ENCODE measurements at regions of chr20 and their contacts with region 1.

Region 1: DNA sequence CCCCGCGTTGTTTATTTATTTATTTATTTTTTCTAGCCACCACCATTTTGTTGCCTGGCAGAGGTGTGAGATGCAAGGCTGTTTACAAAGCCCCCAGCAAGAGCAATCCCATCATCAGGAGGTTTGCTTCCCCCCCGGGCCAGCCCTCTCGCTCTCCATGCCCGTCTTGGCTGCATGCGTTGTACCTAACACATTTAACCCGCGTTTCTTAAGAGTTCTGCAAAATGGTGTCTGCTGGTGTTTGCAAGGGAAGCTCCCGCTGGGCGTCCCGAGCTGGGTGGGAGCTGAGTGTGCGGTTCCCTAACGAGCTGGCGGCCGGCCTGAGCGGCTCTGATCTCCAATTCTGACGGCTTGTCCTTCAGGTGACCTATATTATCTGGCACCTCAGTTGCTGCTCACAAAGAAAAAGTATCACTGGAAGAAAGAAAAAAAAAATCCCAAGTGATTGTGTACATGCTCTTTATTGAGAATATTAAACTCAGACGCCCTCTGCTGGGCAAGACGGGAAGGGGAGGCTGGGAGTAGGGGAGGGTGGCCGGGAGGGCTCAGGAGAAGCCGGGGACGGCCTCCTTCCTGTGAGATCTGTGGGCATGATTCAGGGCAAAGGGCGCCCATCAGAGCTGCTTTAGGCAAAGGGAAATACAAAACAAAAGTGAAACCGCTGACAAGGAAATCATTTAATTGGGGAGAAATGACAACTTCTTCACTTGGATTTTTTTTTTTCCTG is 154.8 kb downstream of the BCAS1 start:
- DNase-seq: peak; percentile 85 to 96 (median 88)
- H3K4me3 ChIP-seq: peak overlapping the region; percentile 91 to 94
- H3K4me3 Mint-ChIP-seq: peak overlapping the region; percentile 91 to 98 (median 96)
- H3K27ac ChIP-seq: peak overlapping the region; percentile 51
- H3K27ac Mint-ChIP-seq: peak overlapping the region; percentile 83 to 98 (median 92)
- H3K4me1 ChIP-seq: peaks cover 15% of the 10 kb centered on the region
- H3K4me1 Mint-ChIP-seq: peaks cover 11 to 22% (median 17%) of the 10 kb centered on the region in 4 donors
- H3K27me3 ChIP-seq: no peaks in the 10 kb centered on the region
- H3K27me3 Mint-ChIP-seq: no peaks in the 10 kb centered on the region

Region 2: DNA sequence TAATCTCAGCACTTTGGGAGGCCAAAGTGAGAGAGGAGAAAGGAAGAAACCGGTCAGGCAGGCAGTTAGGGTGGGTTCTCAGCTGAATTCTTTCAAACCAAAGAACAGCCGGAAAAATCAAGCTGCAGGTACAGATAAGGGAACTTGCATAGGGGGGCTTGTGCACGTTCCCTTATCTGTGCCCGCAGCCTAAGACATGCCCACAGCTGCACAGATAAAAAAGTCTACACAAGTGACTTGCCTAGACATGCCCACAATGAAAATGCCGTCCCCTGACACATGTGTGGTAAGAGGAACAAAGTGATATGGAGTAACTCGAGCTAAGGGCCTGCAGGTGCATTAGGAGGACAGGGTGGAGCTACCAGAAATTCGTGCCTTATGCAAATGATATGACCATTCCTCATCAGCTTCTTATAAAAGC is 1937.5 kb before region 1 on chr20:
- CTCF ChIA-PET with region 1: no interaction called
- POLR2A ChIA-PET with region 1: no interaction called
- intact Hi-C with region 1: no loop called
- DNase-seq: no peak
- H3K4me3 ChIP-seq: no peak overlapping the region
- H3K4me3 Mint-ChIP-seq: no peak overlapping the region
- H3K27ac ChIP-seq: no peak overlapping the region
- H3K27ac Mint-ChIP-seq: no peak overlapping the region
- H3K4me1 ChIP-seq: no peaks in the 10 kb centered on the region
- H3K4me1 Mint-ChIP-seq: no peaks in the 10 kb centered on the region
- H3K27me3 ChIP-seq: no peaks in the 10 kb centered on the region
- H3K27me3 Mint-ChIP-seq: peaks cover 0 to under 1% of the 10 kb centered on the region in 2 donors

Region 3: GRCh38 chr20:53570521-53571357 is 344.9 kb before region 1 on chr20:
- CTCF ChIA-PET with region 1: interaction called, 118 read pairs
- POLR2A ChIA-PET with region 1: no interaction called
- intact Hi-C with region 1: no loop called
- DNase-seq: no peak
- H3K4me3 ChIP-seq: no peak overlapping the region
- H3K4me3 Mint-ChIP-seq: peak overlapping the region in 2 of 8 donors; percentile 9 to 20
- H3K27ac ChIP-seq: no peak overlapping the region
- H3K27ac Mint-ChIP-seq: peak overlapping the region in 6 of 7 donors; percentile 19 to 88 (median 66)
- H3K4me1 ChIP-seq: peaks cover 59% of the 10 kb centered on the region
- H3K4me1 Mint-ChIP-seq: peaks cover 33 to 73% (median 52%) of the 10 kb centered on the region in 4 donors
- H3K27me3 ChIP-seq: no peaks in the 10 kb centered on the region
- H3K27me3 Mint-ChIP-seq: no peaks in the 10 kb centered on the region

Region 4: DNA sequence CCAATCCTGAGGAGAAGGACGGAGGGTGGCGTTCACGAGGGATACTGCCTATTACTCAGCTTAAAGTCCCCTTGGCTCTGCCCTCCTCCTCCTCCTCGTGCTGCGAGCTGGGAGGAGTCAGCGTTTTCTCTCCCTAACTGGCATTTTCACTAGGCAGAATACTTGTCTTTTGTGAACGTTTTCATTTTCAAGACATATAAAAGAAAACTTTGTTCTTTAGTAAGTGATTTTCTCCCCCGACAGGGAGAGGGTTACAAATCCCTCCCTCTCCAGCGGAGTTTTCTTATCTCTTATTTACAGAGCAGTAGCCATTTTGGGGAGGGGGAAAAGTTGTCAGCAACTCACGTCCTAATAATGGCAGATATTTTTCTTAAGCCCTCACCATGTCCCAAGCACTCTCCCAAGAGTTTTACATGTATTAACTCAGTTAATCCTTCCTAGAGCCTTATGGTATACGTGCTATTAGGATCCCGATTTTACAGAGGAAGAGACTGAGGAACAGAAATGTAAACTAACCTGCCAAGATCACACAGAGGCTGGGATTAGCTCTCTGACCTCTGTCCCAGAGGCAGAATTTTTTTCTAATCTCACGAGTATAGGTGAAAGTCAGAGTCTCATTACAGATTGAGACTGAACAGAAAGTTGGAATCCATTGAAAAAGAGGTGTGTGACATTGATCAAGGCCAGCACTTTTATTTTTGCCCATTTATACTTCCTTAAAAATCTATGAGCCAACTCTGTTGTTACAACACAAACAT is 292.0 kb before region 1 on chr20:
- CTCF ChIA-PET with region 1: interaction called, 4 read pairs
- POLR2A ChIA-PET with region 1: interaction called, 15 read pairs
- intact Hi-C with region 1: no loop called
- DNase-seq: peak; percentile 29 to 47 (median 31)
- H3K4me3 ChIP-seq: peak overlapping the region; percentile 43 to 67
- H3K4me3 Mint-ChIP-seq: peak overlapping the region; percentile 82 to 90 (median 88)
- H3K27ac ChIP-seq: peak overlapping the region; percentile 58
- H3K27ac Mint-ChIP-seq: peak overlapping the region; percentile 88 to 97 (median 95)
- H3K4me1 ChIP-seq: peaks cover 37% of the 10 kb centered on the region
- H3K4me1 Mint-ChIP-seq: peaks cover 29 to 38% (median 35%) of the 10 kb centered on the region in 4 donors
- H3K27me3 ChIP-seq: no peaks in the 10 kb centered on the region
- H3K27me3 Mint-ChIP-seq: no peaks in the 10 kb centered on the region

Region 5: GRCh38 chr20:53708129-53708968 is 207.3 kb before region 1 on chr20:
- CTCF ChIA-PET with region 1: interaction called, 12 read pairs
- POLR2A ChIA-PET with region 1: no interaction called
- intact Hi-C with region 1: loop called (anchors 5 kb)
- DNase-seq: peak in 4 of 5 donors; percentile 17 to 41 (median 26)
- H3K4me3 ChIP-seq: no peak overlapping the region
- H3K4me3 Mint-ChIP-seq: peak overlapping the region in 7 of 8 donors; percentile 31 to 91 (median 69)
- H3K27ac ChIP-seq: peak overlapping the region; percentile 3
- H3K27ac Mint-ChIP-seq: peak overlapping the region; percentile 76 to 98 (median 92)
- H3K4me1 ChIP-seq: peaks cover 39% of the 10 kb centered on the region
- H3K4me1 Mint-ChIP-seq: peaks cover 31 to 47% (median 36%) of the 10 kb centered on the region in 4 donors
- H3K27me3 ChIP-seq: no peaks in the 10 kb centered on the region
- H3K27me3 Mint-ChIP-seq: no peaks in the 10 kb centered on the region

Region 6: DNA sequence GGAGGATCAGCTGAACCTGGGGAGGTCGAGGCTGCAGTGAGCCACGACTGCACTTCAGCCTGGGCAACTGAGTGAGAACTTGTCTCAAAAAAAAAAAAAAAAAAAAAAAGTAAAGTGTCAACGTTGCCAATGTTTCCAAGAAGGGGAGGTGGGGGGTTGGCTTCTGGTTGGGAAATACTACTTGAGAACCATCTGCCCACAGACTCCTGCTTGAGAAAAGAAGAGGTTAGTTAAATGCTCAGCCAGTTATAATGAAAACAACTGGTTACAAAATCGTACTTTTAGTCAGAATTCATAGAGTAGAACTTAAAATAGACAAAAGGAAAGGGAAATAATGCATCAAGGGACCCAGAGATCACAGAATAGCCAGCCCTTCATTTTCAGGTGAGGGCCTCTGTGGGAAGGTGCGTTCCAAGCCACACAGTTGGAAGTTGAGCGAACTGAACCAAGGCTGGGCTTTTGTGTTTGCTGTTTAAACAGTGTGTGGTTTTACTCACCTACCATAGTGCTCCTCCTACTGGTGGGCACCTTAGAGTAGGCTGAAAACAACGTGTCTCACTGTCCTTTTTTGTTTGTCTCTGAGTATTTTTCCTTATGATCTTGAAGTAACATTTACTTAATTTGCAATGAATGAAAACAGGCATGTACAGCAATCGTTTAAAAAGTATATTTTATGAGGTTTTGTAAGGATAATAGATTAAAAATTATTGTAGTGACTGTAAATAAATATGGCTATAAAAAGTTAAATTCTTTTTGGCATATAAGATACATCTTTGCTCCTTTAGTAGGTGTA is 45.9 kb before region 1 on chr20:
- CTCF ChIA-PET with region 1: interaction called, 61 read pairs
- POLR2A ChIA-PET with region 1: interaction called, 34 read pairs
- intact Hi-C with region 1: loop called (anchors 1 kb)
- DNase-seq: peak; percentile 73 to 81 (median 77)
- H3K4me3 ChIP-seq: peak overlapping the region in 1 of 2 donors; percentile 15
- H3K4me3 Mint-ChIP-seq: peak overlapping the region in 7 of 8 donors; percentile 30 to 81 (median 66)
- H3K27ac ChIP-seq: peak overlapping the region; percentile 47
- H3K27ac Mint-ChIP-seq: peak overlapping the region; percentile 73 to 97 (median 93)
- H3K4me1 ChIP-seq: peaks cover 89% of the 10 kb centered on the region
- H3K4me1 Mint-ChIP-seq: peaks cover 57 to 90% (median 69%) of the 10 kb centered on the region in 4 donors
- H3K27me3 ChIP-seq: no peaks in the 10 kb centered on the region
- H3K27me3 Mint-ChIP-seq: peaks cover 0 to 2% of the 10 kb centered on the region in 2 donors

Region 7: DNA sequence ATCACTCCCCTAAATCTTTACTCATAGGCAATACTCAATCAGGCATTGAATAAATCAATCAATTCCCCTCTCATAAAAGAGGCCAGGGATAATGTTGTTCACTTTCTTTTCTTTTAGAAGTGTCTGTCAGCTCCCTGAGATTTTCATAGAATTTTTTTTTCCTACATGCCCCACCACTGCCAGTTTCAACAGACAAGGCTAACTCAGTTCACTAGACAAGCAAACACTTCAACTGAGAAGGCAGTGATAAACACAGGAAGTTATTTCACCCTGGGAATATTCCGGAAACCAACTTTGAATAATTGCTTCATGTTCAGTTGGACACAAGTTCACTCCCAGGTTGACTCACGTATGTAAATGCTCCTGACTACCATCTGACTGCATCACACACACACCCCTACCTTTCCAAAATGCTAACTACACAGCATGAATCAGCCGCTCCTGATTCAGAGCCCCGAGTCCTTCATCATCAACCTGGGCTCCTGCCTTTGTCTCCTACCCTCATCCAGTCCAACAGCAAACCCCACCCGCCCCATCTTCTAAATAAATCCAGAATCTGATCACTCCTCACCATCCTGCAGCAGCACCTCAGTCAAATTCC is 10.9 kb after region 1 on chr20:
- CTCF ChIA-PET with region 1: interaction called, 174 read pairs
- POLR2A ChIA-PET with region 1: interaction called, 12 read pairs
- intact Hi-C with region 1: no loop called
- DNase-seq: no peak
- H3K4me3 ChIP-seq: no peak overlapping the region
- H3K4me3 Mint-ChIP-seq: peak overlapping the region in 2 of 8 donors; percentile 5 to 11
- H3K27ac ChIP-seq: no peak overlapping the region
- H3K27ac Mint-ChIP-seq: peak overlapping the region in 4 of 7 donors; percentile 5 to 49 (median 26)
- H3K4me1 ChIP-seq: no peaks in the 10 kb centered on the region
- H3K4me1 Mint-ChIP-seq: peaks cover 13 to 18% (median 14%) of the 10 kb centered on the region in 4 donors
- H3K27me3 ChIP-seq: no peaks in the 10 kb centered on the region
- H3K27me3 Mint-ChIP-seq: peaks cover 0 to under 1% of the 10 kb centered on the region in 2 donors

Region 8: DNA sequence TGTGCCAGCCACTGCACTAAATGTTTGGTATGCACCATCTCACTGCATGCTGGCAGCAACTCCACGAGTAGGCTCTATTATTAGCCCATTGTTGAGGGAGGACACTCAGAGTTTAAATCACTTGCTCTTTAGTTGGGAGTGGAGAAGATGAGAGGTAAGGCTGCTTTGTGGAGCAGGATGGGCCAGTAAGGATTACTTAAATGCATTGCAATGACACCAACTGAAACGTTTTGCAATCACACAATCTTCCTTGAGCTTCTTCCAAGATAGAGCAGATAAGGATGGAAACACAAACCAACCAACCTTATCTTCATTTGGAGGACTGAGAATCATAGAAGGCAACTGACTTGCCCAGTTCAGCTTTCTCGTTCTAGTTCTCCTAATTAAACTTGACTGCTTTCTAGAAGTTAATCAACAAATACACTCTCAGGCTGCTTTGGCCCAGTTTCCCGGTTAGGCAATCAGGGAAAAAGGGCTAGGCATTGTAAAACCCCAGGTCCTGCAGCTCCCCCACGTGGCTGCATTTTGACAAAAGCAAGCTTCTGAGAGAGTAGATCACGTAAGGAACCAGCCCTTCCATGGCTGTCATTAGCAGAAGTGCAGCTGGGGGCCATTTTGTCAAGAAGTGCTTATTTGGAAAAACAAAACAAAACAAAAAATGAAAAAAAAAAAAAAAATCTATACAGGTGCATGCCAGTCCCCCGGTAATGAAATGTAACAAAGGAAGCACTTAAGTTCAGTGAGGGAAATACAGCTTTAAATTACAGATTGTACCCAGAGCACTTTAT is 24.2 kb after region 1 on chr20:
- CTCF ChIA-PET with region 1: interaction called, 174 read pairs
- POLR2A ChIA-PET with region 1: interaction called, 32 read pairs
- intact Hi-C with region 1: loop called (anchors 2 kb)
- DNase-seq: peak; percentile 50 to 60 (median 52)
- H3K4me3 ChIP-seq: no peak overlapping the region
- H3K4me3 Mint-ChIP-seq: no peak overlapping the region
- H3K27ac ChIP-seq: no peak overlapping the region
- H3K27ac Mint-ChIP-seq: peak overlapping the region in 3 of 7 donors; percentile 3 to 77 (median 18)
- H3K4me1 ChIP-seq: peaks cover 21% of the 10 kb centered on the region
- H3K4me1 Mint-ChIP-seq: peaks cover 14 to 43% (median 24%) of the 10 kb centered on the region in 4 donors
- H3K27me3 ChIP-seq: no peaks in the 10 kb centered on the region
- H3K27me3 Mint-ChIP-seq: no peaks in the 10 kb centered on the region

Region 9: GRCh38 chr20:53957451-53958172 is 42.0 kb after region 1 on chr20:
- CTCF ChIA-PET with region 1: no interaction called
- POLR2A ChIA-PET with region 1: no interaction called
- intact Hi-C with region 1: no loop called
- DNase-seq: no peak
- H3K4me3 ChIP-seq: no peak overlapping the region
- H3K4me3 Mint-ChIP-seq: no peak overlapping the region
- H3K27ac ChIP-seq: no peak overlapping the region
- H3K27ac Mint-ChIP-seq: no peak overlapping the region
- H3K4me1 ChIP-seq: no peaks in the 10 kb centered on the region
- H3K4me1 Mint-ChIP-seq: peaks cover 1 to 4% (median 3%) of the 10 kb centered on the region in 4 donors
- H3K27me3 ChIP-seq: no peaks in the 10 kb centered on the region
- H3K27me3 Mint-ChIP-seq: peaks cover 0 to 6% of the 10 kb centered on the region in 2 donors

Region 10: GRCh38 chr20:55561259-55561658 is 1645.7 kb after region 1 on chr20:
- CTCF ChIA-PET with region 1: no interaction called
- POLR2A ChIA-PET with region 1: no interaction called
- intact Hi-C with region 1: no loop called
- DNase-seq: no peak
- H3K4me3 ChIP-seq: no peak overlapping the region
- H3K4me3 Mint-ChIP-seq: no peak overlapping the region
- H3K27ac ChIP-seq: no peak overlapping the region
- H3K27ac Mint-ChIP-seq: no peak overlapping the region
- H3K4me1 ChIP-seq: no peaks in the 10 kb centered on the region
- H3K4me1 Mint-ChIP-seq: no peaks in the 10 kb centered on the region
- H3K27me3 ChIP-seq: no peaks in the 10 kb centered on the region
- H3K27me3 Mint-ChIP-seq: no peaks in the 10 kb centered on the region